Activated T-helper 2 cell treated with anti-CD3 and anti-CD28 coated beads, Interferon-gamma antibody, Interleukin-2, Interleukin-4, amounts not matched to agents 10 μg/mL and 5 μg/mL and 100 μg/mL, durations not matched to agents 14 hours and 24 hours and 36 hours (primary cell): ENCODE measurements at regions of chr5 and their contacts with region 1.

Region 1: GRCh38 chr5:43105369-43106289 is 15.1 kb upstream of the ZNF131 start:
- DNase-seq: peak; percentile 85
- H3K4me3 Mint-ChIP-seq: peak overlapping the region; percentile 80
- H3K27ac Mint-ChIP-seq: peak overlapping the region; percentile 84
- H3K4me1 Mint-ChIP-seq: peaks cover 44% of the 10 kb centered on the region
- H3K27me3 Mint-ChIP-seq: no peaks in the 10 kb centered on the region

Region 2: DNA sequence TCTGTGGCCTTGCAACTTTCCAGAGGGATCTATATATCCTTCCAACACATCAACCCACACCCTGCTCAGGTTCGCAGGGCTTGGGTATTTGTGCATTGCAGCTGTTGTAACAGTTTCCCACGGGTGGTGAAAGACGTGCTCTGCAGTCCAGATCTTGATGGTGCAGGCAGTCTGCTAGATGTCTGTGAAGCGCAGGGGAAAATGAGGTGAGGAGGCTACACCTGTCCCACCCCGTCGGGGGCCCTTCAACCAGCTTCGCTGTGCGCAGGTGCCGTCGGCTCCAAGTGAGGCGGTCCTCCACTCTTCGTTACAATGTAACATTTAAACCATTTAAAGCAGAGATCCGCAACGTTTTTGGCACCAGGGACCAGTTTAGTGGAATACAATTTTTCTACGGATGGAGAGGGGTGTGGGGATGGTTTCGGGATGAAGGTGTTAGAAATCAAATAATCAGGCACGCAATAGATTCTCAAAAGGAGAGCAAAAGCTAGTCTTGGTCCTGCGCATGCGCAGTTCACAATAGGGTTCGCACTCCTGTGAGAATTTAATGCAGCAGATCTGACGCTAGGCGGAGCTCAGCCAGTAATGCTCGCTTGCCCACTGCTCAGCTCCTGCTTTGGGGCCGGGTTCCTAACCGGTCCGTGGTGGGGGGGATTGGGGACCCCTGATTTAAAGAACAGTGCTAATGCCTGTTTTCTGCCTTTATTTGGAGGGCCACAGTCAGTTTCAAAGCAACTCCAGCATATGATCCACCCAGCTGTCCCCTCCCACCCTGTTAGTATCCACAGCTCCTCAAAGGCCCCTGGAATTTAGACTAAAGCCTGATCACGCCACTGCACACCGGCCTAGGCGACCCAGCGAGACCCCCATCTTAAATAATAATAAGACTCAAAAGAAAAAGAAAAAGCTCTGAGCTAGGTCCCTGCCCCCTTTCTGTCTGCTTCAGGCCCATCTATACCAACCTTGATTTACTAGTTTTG is 196.8 kb before region 1 on chr5:
- intact Hi-C with region 1: loop called (anchors 5 kb)
- DNase-seq: peak; percentile 86
- H3K4me3 Mint-ChIP-seq: peak overlapping the region; percentile 77
- H3K27ac Mint-ChIP-seq: peak overlapping the region; percentile 14
- H3K4me1 Mint-ChIP-seq: peaks cover 16% of the 10 kb centered on the region
- H3K27me3 Mint-ChIP-seq: peaks cover 31% of the 10 kb centered on the region

Region 3: GRCh38 chr5:43040287-43041098 is 65.1 kb before region 1 on chr5 and contains the start of gene ANXA2R:
- intact Hi-C with region 1: loop called (anchors 2 kb)
- DNase-seq: peak; percentile 95
- H3K4me3 Mint-ChIP-seq: peak within 1 kb of the TSS; percentile 92
- H3K27ac Mint-ChIP-seq: peak within 1 kb of the TSS; percentile 97
- H3K4me1 Mint-ChIP-seq: peaks cover 47% of the 10 kb centered on the region
- H3K27me3 Mint-ChIP-seq: no peaks in the 10 kb centered on the region
- total RNA-seq, gene ANXA2R: 2.1 and 2.5 TPM in 2 replicates

Region 4: DNA sequence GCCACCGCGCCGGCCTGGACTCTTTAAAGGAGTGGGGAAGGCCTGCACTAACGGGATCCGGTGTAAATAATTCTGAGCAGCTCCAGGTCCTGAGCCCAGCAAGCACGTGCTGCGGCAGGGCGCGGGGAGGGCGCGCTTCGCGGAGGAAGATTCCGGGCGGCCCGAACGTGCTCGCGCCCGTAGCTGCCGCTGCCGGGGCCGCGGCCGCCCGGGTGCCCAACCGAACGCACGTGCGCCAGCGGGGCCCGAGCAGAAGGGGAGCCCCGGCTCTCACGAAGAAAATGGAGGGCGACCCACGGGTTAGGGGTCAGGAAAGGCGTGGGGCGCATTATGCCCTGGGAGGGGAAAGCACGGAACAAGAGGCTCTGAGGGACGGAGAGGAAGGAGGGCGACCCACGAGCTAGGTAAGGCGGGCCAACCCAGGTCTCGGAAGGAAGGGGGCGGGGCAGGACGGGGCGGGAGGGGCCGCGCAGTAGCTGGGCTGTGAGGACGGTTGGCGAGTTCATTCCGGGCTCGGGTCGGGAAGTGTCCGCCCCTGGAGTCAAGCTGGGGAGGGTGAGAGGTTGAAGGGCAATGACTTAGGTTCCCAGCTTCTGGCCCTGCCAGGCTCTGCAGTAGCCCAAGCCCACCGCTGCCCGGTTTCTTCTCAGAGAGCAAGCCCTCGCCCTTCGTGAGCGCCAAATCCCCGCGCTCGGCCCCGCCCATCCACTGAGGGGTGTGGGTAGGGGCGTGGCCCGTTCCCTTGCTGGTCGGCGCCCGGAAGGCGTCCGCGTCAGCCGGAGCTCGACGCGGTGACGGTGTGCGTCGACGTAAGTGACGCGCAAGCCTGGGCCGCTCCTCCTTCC is 15.3 kb after region 1 on chr5 and contains the start of gene ZNF131:
- intact Hi-C with region 1: loop called (anchors 1 kb)
- DNase-seq: peak; percentile 96
- H3K4me3 Mint-ChIP-seq: peak within 1 kb of the TSS; percentile 97
- H3K27ac Mint-ChIP-seq: peak within 1 kb of the TSS; percentile 99
- H3K4me1 Mint-ChIP-seq: peaks cover 31% of the 10 kb centered on the region
- H3K27me3 Mint-ChIP-seq: no peaks in the 10 kb centered on the region
- total RNA-seq, gene ZNF131: 37.4 and 40.3 TPM in 2 replicates

Region 5: GRCh38 chr5:43215073-43215631 is 109.5 kb after region 1 on chr5:
- intact Hi-C with region 1: no loop called
- DNase-seq: no peak
- H3K4me3 Mint-ChIP-seq: no peak overlapping the region
- H3K27ac Mint-ChIP-seq: no peak overlapping the region
- H3K4me1 Mint-ChIP-seq: no peaks in the 10 kb centered on the region
- H3K27me3 Mint-ChIP-seq: peaks cover 21% of the 10 kb centered on the region

Region 6: DNA sequence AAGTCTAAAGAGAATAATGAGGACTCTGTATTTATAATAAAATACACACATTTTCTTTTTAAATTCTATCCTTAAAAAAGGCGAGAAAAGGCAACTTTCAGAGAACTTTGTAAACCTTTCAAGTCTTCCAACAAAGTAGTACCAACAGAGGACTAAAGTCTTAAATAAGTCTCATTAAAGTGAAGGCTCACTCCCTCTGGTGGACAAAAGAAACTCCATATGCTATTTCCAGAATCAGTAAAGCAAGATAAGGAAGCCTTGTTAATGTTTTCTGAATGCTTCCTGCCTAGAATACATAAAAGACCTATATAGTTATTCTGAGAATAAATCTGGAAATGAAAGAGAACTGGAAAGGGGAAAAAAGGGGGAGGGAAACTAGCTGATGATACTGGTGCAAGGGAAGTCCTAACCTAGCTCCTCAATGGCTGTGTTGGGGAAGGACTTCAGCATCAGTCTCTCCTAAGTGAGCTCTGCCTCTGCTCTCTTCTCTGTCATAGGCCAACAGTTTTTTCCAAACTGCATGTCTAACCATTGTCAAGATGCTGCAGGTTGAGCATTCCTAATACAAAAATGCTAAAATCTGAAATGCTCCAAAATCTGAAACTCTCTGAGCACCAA is 200.4 kb after region 1 on chr5:
- intact Hi-C with region 1: loop called (anchors 1 kb)
- DNase-seq: no peak
- H3K4me3 Mint-ChIP-seq: peak overlapping the region; percentile 10
- H3K27ac Mint-ChIP-seq: peak overlapping the region; percentile 68
- H3K4me1 Mint-ChIP-seq: peaks cover 84% of the 10 kb centered on the region
- H3K27me3 Mint-ChIP-seq: no peaks in the 10 kb centered on the region

Region 7: DNA sequence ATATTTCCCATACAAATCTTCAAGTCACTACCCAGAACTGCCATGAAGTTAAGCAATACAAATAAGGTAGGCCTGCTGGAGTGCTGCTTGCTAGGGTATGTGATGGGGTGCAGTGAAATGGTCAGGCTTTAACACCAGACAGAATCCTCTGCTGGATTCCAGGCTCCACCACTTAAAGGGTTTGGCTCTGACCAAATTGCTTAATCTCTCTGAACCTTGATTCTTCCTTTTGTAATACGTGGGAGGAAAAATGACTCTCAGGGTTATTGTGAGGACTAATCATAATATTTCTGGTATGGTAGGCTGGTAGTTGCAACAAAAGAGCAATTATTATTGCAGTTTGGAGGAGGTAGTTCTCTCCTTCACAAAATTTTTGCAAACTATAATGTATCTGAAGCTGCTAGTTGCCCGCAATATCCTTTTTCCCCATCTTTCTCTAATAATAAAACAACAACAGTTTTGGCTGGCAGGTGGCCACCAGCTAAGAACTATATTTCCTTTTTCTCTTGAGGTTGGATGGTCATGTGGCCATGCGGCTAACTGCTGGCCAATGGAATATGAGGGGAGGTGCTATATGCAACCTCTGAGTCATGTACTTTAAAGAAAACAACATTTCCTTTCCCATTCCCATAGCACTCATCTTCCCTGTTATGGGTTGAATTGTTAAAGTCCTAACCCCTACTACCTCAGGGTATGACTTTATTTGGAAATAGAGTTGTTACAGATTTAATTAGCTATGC is 262.4 kb after region 1 on chr5:
- intact Hi-C with region 1: no loop called
- DNase-seq: no peak
- H3K4me3 Mint-ChIP-seq: no peak overlapping the region
- H3K27ac Mint-ChIP-seq: no peak overlapping the region
- H3K4me1 Mint-ChIP-seq: peaks cover 4% of the 10 kb centered on the region
- H3K27me3 Mint-ChIP-seq: peaks cover 4% of the 10 kb centered on the region

Region 8: DNA sequence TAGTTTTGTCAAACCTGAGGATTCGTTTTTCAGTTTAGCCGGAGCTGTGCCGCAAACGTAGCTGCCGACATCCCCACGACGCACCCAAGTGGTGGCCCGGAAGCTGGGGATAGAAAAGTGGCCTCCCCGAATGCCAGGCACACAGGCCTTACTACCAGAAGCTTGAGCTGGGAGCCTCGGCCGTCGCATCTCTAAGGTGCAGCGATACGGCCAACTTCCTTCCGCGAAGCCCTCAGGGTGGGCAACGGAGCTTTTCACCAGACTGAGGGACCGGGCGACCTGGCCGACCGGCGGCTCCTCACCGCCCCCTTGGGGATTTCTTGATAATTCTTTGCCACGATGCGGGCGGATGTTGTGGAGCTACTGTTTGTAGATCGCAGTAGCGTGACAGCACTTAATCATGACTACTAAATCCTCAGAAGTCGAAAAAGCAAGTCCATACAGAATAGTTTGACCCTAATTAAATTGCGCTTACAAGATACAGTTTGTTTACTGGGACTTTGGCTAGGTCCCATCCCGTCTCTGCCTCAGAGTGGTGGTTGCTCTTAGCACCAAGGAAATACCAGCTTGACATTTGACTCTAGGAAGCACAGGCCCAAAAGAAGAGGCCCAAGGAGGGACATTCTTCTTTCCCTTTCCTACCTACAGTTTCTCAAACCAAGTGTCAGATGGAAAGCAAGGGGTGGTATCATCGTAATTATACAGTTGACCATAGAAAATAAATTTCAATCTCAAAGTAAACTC is 378.6 kb after region 1 on chr5:
- intact Hi-C with region 1: loop called (anchors 5 kb)
- DNase-seq: peak; percentile 87
- H3K4me3 Mint-ChIP-seq: peak overlapping the region; percentile 93
- H3K27ac Mint-ChIP-seq: peak overlapping the region; percentile 99
- H3K4me1 Mint-ChIP-seq: peaks cover 41% of the 10 kb centered on the region
- H3K27me3 Mint-ChIP-seq: no peaks in the 10 kb centered on the region